Activated B cell treated with CpG ODN at 0.5 μM for 24 hours (primary cell): ENCODE measurements at regions of chr3 and their contacts with region 1.

Region 1: GRCh38 chr3:71397046-71397445 is 186.5 kb downstream of the FOXP1 start:
- DNase-seq: no peak
- ATAC-seq: no peak
- H3K4me3 Mint-ChIP-seq: peak overlapping the region; percentile 36
- H3K27ac Mint-ChIP-seq: peak overlapping the region; percentile 72
- H3K4me1 Mint-ChIP-seq: peaks cover 85% of the 10 kb centered on the region
- H3K27me3 Mint-ChIP-seq: no peaks in the 10 kb centered on the region
- CTCF ChIP-seq: no peak

Region 2: GRCh38 chr3:71226565-71227269 is 170.3 kb before region 1 on chr3:
- CTCF ChIA-PET with region 1: no interaction called
- POLR2A ChIA-PET with region 1: interaction called, 10 read pairs
- intact Hi-C with region 1: loop called (anchors 10 kb)
- DNase-seq: peak; percentile 50
- ATAC-seq: peak; percentile 76
- H3K4me3 Mint-ChIP-seq: peak overlapping the region; percentile 89
- H3K27ac Mint-ChIP-seq: peak overlapping the region; percentile 97
- H3K4me1 Mint-ChIP-seq: peaks cover 76% of the 10 kb centered on the region
- H3K27me3 Mint-ChIP-seq: no peaks in the 10 kb centered on the region
- CTCF ChIP-seq: no peak

Region 3: DNA sequence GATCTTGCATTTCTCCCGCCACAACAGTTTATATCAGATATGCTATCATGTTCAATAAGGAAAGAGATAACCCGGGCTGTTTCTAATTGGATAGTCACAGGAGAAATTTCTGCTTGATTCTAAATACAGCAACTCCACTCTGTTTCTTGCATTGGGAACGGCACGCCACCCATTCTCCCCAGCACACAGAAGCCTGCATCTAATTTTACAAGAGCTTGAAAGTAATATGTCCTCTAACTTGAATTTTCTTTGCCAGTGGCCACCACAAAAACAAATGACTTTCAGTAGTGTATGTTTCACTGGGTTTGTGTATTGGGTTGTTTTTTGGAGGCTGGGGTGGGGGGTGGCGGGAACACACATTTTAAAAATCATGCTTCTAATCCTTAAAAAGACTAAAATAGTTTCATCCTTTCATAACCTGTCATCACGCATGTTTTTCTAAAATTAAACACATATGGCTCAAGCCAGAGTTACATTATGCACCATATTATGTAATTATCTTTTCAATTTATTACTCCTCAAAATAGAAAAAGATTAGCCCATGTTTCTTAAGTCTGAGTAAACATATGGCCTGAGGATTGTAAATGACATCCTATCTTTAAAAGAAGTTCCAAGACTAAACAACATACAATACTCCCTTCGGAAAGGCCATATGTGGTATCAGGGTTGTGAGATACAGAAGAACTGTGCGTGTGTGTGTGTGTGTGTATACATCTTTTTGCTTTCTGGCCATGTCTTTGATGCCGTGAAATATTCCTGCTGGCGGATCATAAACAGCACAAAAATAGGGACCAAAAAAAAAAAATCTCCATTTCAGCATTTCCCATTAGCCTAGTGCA is 10.1 kb after region 1 on chr3:
- CTCF ChIA-PET with region 1: interaction called, 3 read pairs
- POLR2A ChIA-PET with region 1: interaction called, 8 read pairs
- intact Hi-C with region 1: loop called (anchors 1 kb)
- DNase-seq: no peak
- ATAC-seq: no peak
- H3K4me3 Mint-ChIP-seq: no peak overlapping the region
- H3K27ac Mint-ChIP-seq: peak overlapping the region; percentile 85
- H3K4me1 Mint-ChIP-seq: peaks cover 71% of the 10 kb centered on the region
- H3K27me3 Mint-ChIP-seq: no peaks in the 10 kb centered on the region
- CTCF ChIP-seq: no peak

Region 4: GRCh38 chr3:71423151-71423906 is 26.3 kb after region 1 on chr3:
- CTCF ChIA-PET with region 1: interaction called, 17 read pairs
- POLR2A ChIA-PET with region 1: interaction called, 13 read pairs
- intact Hi-C with region 1: loop called (anchors 1 kb)
- DNase-seq: no peak
- ATAC-seq: no peak
- H3K4me3 Mint-ChIP-seq: no peak overlapping the region
- H3K27ac Mint-ChIP-seq: peak overlapping the region; percentile 99
- H3K4me1 Mint-ChIP-seq: peaks cover 91% of the 10 kb centered on the region
- H3K27me3 Mint-ChIP-seq: no peaks in the 10 kb centered on the region
- CTCF ChIP-seq: no peak

Region 5: GRCh38 chr3:71456156-71456555 is 59.1 kb after region 1 on chr3:
- CTCF ChIA-PET with region 1: interaction called, 3 read pairs
- POLR2A ChIA-PET with region 1: interaction called, 14 read pairs
- intact Hi-C with region 1: no loop called
- DNase-seq: no peak
- ATAC-seq: peak; percentile 35
- H3K4me3 Mint-ChIP-seq: peak overlapping the region; percentile 66
- H3K27ac Mint-ChIP-seq: peak overlapping the region; percentile 88
- H3K4me1 Mint-ChIP-seq: peaks cover 76% of the 10 kb centered on the region
- H3K27me3 Mint-ChIP-seq: no peaks in the 10 kb centered on the region
- CTCF ChIP-seq: no peak

Region 6: GRCh38 chr3:71577011-71577410 is 180.0 kb after region 1 on chr3:
- CTCF ChIA-PET with region 1: interaction called, 4 read pairs
- POLR2A ChIA-PET with region 1: interaction called, 72 read pairs
- intact Hi-C with region 1: loop called (anchors 2 kb)
- DNase-seq: no peak
- ATAC-seq: no peak
- H3K4me3 Mint-ChIP-seq: peak overlapping the region; percentile 64
- H3K27ac Mint-ChIP-seq: peak overlapping the region; percentile 78
- H3K4me1 Mint-ChIP-seq: peaks cover 56% of the 10 kb centered on the region
- H3K27me3 Mint-ChIP-seq: no peaks in the 10 kb centered on the region
- CTCF ChIP-seq: no peak